Stomach (tissue), 19 donors: ENCODE measurements at regions of chr5 and their contacts with region 1.

Region 1: DNA sequence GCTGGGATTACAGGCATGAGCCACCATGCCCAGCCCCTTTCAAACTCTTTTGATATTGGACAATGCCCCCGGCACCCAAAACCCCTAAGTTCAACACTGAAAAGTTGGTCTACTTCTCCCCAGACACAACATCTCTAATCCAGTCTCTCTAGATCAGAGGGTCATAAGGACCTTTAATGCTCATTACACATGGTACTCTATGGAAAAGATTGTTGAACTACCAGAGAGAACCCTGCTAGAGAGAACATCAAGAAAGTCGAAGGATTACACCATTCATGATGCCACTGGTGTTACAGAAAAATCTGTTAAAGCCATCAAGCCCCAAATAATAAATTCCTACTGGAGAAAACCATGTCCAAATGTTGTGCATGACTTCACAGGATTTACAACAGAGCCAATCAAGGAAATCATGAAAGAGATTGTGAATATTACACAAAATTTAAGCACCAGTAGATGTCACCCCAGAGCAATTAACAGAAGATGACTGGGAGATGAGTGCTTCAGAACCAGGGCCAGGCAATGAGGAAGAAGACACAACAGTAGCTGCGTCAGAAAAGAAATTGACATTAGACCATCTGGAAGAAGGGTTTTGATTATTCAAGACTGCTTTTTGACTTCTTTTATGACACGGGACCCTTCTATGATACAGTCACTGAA is 28.3 kb upstream of the NIPAL4 start:
- DNase-seq: peak in 1 of 2 donors; percentile 82
- H3K4me3 ChIP-seq: no peak overlapping the region
- H3K27ac ChIP-seq: no peak overlapping the region
- H3K4me1 ChIP-seq: no peaks in the 10 kb centered on the region
- H3K27me3 ChIP-seq: no peaks in the 10 kb centered on the region
- CTCF ChIP-seq: peak in 5 of 7 experiments; percentile 17 to 62 (median 44)
- EP300 ChIP-seq: no peak
- POLR2A ChIP-seq: no peak

Region 2: GRCh38 chr5:156934450-156935211 is 497.0 kb before region 1 on chr5:
- intact Hi-C with region 1: no loop called
- DNase-seq: peak in 1 of 2 donors; percentile 60
- H3K4me3 ChIP-seq: no peak overlapping the region
- H3K27ac ChIP-seq: no peak overlapping the region
- H3K4me1 ChIP-seq: no peaks in the 10 kb centered on the region
- H3K27me3 ChIP-seq: no peaks in the 10 kb centered on the region
- CTCF ChIP-seq: peak in 3 of 7 experiments; percentile 18 to 35 (median 23)
- EP300 ChIP-seq: no peak
- POLR2A ChIP-seq: no peak

Region 3: DNA sequence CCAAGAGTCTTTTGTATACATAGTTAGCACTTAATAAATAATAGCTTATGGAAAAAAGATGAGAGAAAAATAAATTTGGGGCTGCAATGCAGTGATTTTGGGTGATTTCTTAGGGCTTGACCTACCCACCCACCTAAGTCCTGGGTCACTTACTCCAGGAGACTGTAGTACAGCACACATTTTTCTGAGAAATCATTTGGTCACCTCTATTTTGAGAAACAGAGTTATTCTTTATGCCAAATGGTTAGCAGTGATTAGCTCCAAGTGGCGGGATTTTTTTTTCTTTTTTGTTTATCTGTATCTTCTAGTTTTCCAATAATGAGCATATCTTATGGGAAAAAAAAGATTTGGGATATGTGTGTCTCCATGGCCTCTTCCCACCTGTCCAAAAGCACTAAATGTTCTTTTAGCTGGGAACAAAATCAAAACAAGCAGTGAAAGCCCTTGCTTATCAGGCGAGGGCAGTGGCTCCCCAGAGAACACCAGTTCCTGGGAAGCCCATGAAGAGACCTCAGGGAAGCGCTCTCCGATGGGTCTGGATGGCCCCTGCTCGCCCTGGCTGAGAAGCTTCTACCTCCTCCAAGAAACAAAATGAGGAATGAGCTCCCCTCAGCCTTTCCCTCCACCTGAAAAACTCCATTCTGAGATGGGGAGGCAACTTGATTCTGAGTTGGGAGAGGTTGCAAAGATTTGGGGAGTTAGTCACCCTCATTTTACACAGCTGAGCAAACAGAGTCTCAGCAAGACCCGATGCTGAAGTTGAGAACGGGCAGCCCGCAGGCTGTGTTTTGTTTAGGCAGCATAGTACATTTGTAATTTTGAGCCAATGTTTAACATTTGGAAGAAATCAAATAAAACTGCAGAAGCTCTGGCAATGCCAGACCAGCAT is 95.9 kb before region 1 on chr5:
- intact Hi-C with region 1: no loop called
- DNase-seq: no peak
- H3K4me3 ChIP-seq: no peak overlapping the region
- H3K27ac ChIP-seq: peak overlapping the region in 4 of 5 donors; percentile 10 to 62 (median 48)
- H3K4me1 ChIP-seq: peaks cover 0 to 25% (median 15%) of the 10 kb centered on the region in 4 donors
- H3K27me3 ChIP-seq: no peaks in the 10 kb centered on the region
- CTCF ChIP-seq: no peak
- EP300 ChIP-seq: no peak
- POLR2A ChIP-seq: no peak

Region 4: DNA sequence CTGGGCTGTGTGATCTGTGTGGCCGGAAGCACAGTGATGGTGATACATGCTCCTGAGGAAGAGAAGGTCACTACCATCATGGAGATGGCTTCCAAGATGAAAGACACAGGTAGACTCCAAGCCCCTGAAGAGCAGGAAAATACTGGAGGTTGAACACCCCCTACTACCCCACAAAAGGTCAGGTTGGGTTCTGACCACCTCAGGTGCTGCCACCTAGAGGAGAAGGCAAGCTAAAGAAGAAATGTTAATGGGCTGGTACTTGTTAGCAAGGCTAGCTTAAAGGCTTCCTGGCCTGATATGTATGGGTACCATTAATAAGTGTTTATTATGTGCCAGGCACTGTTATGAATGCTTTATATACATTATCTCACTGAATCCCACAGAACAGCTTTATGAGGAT is 40.0 kb after region 1 on chr5:
- intact Hi-C with region 1: loop called (anchors 5 kb)
- DNase-seq: peak in 1 of 2 donors; percentile 45
- H3K4me3 ChIP-seq: no peak overlapping the region
- H3K27ac ChIP-seq: no peak overlapping the region
- H3K4me1 ChIP-seq: peaks cover 0 to 18% (median 4%) of the 10 kb centered on the region in 4 donors
- H3K27me3 ChIP-seq: no peaks in the 10 kb centered on the region
- CTCF ChIP-seq: peak in 4 of 7 experiments; percentile 6 to 45 (median 38)
- EP300 ChIP-seq: no peak
- POLR2A ChIP-seq: no peak

Region 5: DNA sequence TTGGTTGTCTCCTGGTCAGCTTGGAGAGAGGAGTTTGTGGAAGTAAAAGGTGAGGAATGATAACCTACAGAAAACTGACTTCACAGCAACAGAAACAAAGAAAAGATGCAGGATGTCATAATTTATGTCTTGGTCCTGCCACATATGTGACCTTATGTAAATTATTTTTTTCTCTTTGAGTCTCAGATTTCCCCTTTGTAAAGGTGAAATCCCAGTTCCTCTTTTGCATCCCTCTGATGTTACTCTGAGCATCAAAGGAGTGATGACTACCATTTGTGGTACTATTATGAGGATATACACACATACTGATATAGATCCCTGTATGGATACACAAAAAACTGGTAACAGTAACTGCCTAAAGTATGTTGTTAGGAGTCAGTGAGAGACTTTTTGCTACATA is 298.2 kb after region 1 on chr5:
- intact Hi-C with region 1: loop called (anchors 10 kb)
- DNase-seq: no peak
- H3K4me3 ChIP-seq: no peak overlapping the region
- H3K27ac ChIP-seq: no peak overlapping the region
- H3K4me1 ChIP-seq: peaks cover 0 to 29% (median 13%) of the 10 kb centered on the region in 4 donors
- H3K27me3 ChIP-seq: no peaks in the 10 kb centered on the region
- CTCF ChIP-seq: no peak
- EP300 ChIP-seq: no peak
- POLR2A ChIP-seq: no peak